Activated T-helper 1 cell treated with anti-CD3 and anti-CD28 coated beads, Interleukin-12 subunit alpha, Interleukin-12 subunit beta, Interleukin-2, Interleukin-4 antibody, amounts not matched to agents 30 ng/mL and 10 ng/mL and 1 ng/mL, durations not matched to agents 14 hours and 24 hours and 36 hours (primary cell): ENCODE measurements at regions of chr5 and their contacts with region 1.

Region 1: GRCh38 chr5:181260387-181261319 is at the start of gene TRIM52:
- DNase-seq: peak; percentile 87
- H3K4me3 Mint-ChIP-seq: peak within 1 kb of the TSS; percentile 99
- H3K27ac Mint-ChIP-seq: peak within 1 kb of the TSS; percentile 96
- H3K4me1 Mint-ChIP-seq: peaks cover 45% of the 10 kb centered on the region
- H3K27me3 Mint-ChIP-seq: no peaks in the 10 kb centered on the region
- total RNA-seq, gene TRIM52: 15.3 and 17.1 TPM in 2 replicates

Region 2: GRCh38 chr5:180810210-180810958 is 450.3 kb before region 1 on chr5:
- intact Hi-C with region 1: loop called (anchors 5 kb)
- DNase-seq: peak; percentile 91
- H3K4me3 Mint-ChIP-seq: peak overlapping the region; percentile 84
- H3K27ac Mint-ChIP-seq: peak overlapping the region; percentile 99
- H3K4me1 Mint-ChIP-seq: peaks cover 78% of the 10 kb centered on the region
- H3K27me3 Mint-ChIP-seq: peaks cover 2% of the 10 kb centered on the region

Region 3: DNA sequence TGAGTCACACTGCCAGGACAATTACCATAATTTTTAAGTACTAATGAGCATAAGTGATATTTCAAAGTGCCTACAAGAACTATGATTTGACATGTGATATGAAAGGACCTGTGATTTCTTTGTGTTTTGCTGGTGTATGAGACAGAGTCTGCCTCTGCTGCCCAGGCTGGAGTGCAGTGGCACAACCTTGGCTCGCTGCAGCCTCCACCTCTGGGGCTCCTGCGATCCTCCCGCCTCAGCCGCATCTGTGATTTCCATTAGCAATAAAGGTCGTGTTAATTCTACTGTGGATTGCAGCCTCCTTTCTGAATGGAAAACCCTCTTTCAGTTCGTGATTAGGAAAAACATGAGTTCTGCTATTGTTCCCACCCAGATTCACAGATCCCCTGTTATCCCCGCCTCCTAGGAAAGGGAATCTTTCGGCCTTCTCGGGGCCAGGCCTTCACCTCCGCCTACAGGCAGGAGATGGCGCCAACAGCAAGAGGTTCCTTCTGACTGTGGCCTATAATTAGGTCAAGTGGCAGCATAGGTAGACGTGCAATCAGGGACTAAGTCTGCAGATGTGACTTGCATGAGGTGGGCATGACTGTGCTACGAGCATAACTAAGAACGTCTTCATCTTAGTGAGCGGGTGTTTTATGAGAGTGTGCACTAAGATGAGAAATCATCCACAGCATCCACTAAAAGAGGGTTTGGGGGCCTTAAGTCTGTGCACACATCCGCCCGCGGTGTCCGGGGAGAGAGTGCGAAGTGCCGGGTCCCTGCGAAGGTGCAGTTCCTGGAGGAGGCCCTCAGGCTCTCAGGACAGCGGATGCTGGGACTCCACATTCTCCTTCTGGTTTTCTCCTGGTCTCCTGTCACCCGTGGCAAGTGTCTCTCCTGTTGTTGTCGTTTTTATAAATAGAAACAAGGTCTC is 78.7 kb before region 1 on chr5:
- intact Hi-C with region 1: loop called (anchors 1 kb)
- DNase-seq: no peak
- H3K4me3 Mint-ChIP-seq: peak overlapping the region; percentile 63
- H3K27ac Mint-ChIP-seq: peak overlapping the region; percentile 64
- H3K4me1 Mint-ChIP-seq: peaks cover 22% of the 10 kb centered on the region
- H3K27me3 Mint-ChIP-seq: peaks cover 5% of the 10 kb centered on the region

Region 4: DNA sequence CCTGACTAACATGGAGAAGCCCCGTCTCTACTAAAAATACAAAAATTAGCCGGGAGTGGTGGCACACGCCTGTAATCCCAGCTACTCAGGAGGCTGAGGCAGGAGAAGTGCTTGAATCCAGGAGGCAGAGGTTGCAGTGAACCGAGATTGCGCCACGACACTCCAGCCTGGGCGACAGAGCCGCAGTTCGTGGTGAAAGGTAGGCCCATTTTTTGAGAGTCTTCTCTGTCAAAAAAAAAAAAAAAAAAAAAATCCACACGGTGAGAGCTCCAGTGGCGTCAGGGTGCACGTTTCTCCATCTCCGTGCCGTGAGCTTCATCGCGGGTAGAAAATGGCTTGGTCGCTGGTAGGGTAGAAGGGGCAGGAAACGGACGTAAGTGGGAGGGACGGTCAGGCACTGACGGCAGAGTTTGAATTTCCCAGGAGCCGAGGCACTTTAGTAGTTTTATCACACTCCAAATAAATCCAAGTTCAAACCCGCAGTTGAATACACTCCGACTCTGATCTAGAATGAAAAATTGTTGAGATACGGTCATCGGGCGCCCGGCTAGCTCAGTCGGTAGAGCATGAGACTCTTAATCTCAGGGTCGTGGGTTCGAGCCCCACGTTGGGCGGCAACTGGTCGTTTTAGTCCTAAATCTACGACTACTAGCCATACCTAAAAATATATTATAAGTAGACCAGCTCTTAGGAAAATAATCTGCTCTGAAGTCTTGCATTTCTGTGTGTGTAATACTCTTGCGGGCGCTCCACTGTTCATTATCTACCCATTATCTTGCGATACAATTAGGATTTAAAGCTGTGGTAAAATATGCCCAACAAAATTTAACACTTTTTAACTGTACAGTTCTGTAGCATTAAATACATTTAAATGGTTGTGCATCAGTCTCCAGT is 53.2 kb before region 1 on chr5:
- intact Hi-C with region 1: loop called (anchors 1 kb)
- DNase-seq: peak; percentile 59
- H3K4me3 Mint-ChIP-seq: peak overlapping the region; percentile 89
- H3K27ac Mint-ChIP-seq: peak overlapping the region; percentile 95
- H3K4me1 Mint-ChIP-seq: peaks cover 34% of the 10 kb centered on the region
- H3K27me3 Mint-ChIP-seq: peaks cover 28% of the 10 kb centered on the region

Region 5: GRCh38 chr5:181243512-181244343 is 16.9 kb before region 1 on chr5 and contains the start of gene RACK1:
- intact Hi-C with region 1: loop called (anchors 1 kb)
- DNase-seq: peak; percentile 82
- H3K4me3 Mint-ChIP-seq: peak within 1 kb of the TSS; percentile 96
- H3K27ac Mint-ChIP-seq: peak within 1 kb of the TSS; percentile 99
- H3K4me1 Mint-ChIP-seq: peaks cover 49% of the 10 kb centered on the region
- H3K27me3 Mint-ChIP-seq: no peaks in the 10 kb centered on the region
- total RNA-seq, gene RACK1: 2,098 and 2,121 TPM in 2 replicates